Sigmoid colon (tissue), 7 donors: ENCODE measurements at regions of chr5 and their contacts with region 1.

Region 1: DNA sequence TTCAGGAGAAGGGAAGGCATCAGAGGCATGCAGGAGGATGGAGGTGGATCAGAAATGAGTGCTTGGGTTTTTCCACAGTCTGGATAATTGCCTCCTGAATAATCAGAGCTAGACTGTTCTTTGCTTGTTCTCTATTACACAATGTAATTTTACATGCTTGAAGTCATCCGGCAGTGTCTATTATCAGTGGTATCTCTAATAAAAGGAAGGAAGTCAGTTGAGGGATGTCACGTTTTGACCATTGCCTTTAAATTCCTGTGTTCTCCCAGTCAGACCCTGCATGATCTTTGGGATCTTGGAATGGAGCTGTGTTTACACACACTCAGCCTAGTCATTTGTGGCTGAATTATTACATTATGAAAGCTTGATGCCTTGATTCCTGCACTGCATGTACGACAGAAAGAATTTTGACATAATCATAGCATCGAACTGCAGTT is 91.0 kb downstream of the PDE8B start:
- DNase-seq: no peak
- H3K4me3 ChIP-seq: no peak overlapping the region
- H3K27ac ChIP-seq: peak overlapping the region in 2 of 4 donors; percentile 26 to 47
- H3K4me1 ChIP-seq: peaks cover 0 to 41% (median 24%) of the 10 kb centered on the region in 4 donors
- H3K27me3 ChIP-seq: no peaks in the 10 kb centered on the region
- CTCF ChIP-seq: no peak
- EP300 ChIP-seq: no peak
- POLR2A ChIP-seq: no peak

Region 2: DNA sequence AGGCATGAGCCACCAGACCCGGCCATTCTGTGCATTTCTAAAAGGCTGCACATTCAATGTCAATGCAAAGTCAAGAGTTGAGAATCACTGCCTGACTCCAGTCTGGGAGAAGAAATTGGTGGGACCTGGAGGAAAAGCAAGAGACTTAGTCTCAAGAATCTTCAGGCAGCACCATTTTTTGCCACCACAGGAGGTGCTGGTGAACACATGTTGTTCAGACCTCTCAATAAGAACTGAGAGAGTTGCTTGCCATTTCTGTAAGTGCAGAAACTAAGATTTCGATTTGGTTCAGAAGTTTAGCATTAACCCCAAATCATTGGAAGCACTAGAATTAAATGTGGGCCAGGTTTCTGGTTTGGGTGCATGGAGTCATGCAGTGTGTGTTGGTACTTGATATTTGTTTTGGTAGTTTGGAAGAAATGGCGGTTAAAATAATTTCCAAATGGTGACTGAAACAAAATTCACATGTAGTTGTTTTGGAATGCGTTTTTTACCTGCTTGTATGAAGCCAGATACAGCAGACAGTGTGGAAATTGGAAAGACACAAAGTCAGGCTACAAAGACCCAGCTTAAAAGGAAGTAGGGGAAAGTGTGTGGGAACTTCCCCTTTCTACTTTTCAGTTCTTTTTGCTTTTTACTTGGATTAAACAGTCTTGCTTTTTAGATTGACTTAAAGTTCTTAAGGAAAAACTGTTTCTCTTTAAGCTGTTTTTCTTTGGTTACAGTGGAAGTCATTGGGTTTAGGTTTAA is 70.6 kb before region 1 on chr5:
- intact Hi-C with region 1: no loop called
- DNase-seq: no peak
- H3K4me3 ChIP-seq: no peak overlapping the region
- H3K27ac ChIP-seq: no peak overlapping the region
- H3K4me1 ChIP-seq: no peaks in the 10 kb centered on the region
- H3K27me3 ChIP-seq: no peaks in the 10 kb centered on the region
- CTCF ChIP-seq: no peak
- EP300 ChIP-seq: no peak
- POLR2A ChIP-seq: no peak

Region 3: GRCh38 chr5:77426670-77427069 is 125.2 kb after region 1 on chr5:
- intact Hi-C with region 1: loop called (anchors 10 kb)
- DNase-seq: no peak
- H3K4me3 ChIP-seq: no peak overlapping the region
- H3K27ac ChIP-seq: no peak overlapping the region
- H3K4me1 ChIP-seq: peaks cover 0 to 60% (median 29%) of the 10 kb centered on the region in 4 donors
- H3K27me3 ChIP-seq: no peaks in the 10 kb centered on the region
- CTCF ChIP-seq: no peak
- EP300 ChIP-seq: no peak
- POLR2A ChIP-seq: no peak